Endothelial cell of umbilical vein (primary cell): ENCODE measurements at regions of chr1 and their contacts with region 1.

Region 1: DNA sequence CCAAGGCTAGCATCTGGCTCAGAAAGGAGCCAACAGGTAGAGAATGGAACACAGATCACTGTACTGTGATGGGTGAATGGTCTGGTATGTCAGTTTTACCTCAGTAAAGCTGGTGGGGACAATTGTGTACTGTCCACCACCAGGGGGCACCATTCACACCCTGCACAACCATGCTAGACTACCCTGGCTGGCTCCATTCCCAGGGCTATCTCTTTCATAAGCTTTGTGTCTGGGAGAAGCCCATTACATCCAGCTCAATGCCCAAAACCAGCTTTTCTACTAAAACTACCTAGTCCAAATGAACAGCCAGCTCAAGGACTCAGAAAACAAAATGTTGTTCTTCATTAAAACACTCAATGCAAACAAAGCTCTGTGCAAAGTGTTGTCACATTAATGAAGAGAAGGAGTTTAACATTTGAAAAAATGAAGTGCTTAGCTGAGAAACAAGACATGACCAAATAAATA is 62.0 kb upstream of the RASAL2 start:
- DNase-seq: peak; percentile 84
- H3K4me3 ChIP-seq: no peak overlapping the region
- H3K27ac ChIP-seq: no peak overlapping the region
- H3K4me1 ChIP-seq: peaks cover 7% of the 10 kb centered on the region
- H3K27me3 ChIP-seq: no peaks in the 10 kb centered on the region
- CTCF ChIP-seq: peak; percentile 80 to 84
- POLR2A ChIP-seq: no peak

Region 2: DNA sequence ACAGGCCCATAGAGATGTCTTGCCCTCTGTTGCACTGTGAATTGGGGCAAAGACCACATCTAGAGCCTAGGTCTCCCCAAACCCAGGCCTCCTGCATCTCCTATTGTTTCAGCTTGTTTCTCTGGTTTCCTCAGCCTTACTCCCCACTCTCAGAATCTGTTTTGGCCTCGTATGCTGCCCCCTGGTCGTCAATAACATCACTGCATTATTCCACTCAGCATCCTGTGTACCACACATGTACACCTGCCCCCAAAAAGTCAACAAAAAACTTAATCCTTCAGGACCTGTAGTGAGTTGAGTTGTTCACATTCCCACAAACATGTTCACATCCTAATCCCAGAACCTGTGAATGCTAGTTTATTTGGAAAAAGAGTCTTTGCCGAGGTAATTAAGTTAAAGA is 676.3 kb before region 1 on chr1:
- CTCF ChIA-PET with region 1: no interaction called
- POLR2A ChIA-PET with region 1: no interaction called
- dilution Hi-C with region 1: no loop called
- intact Hi-C with region 1: no loop called
- DNase-seq: peak; percentile 6
- H3K4me3 ChIP-seq: no peak overlapping the region
- H3K27ac ChIP-seq: no peak overlapping the region
- H3K4me1 ChIP-seq: no peaks in the 10 kb centered on the region
- H3K27me3 ChIP-seq: no peaks in the 10 kb centered on the region
- CTCF ChIP-seq: peak; percentile 12 to 21
- POLR2A ChIP-seq: no peak

Region 3: DNA sequence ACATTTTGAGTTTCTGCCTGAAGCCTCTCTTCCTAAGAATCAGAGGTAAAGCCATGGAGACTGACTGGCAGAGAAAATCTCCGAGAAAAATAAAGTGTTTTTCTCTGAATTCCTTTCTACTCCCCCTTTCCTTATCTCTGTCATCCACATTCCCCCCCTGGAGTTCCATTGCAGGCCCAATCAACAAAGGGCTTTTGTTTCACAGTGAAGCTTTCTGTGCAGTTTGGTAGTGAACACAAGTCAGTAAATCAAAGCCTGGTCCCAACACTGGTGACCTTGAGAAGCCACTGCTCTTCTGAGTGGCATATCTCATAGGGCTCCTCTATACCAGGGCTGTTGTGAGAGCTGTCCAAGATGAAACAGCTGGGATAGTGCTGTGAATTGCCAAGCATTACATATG is 290.4 kb before region 1 on chr1:
- CTCF ChIA-PET with region 1: no interaction called
- POLR2A ChIA-PET with region 1: no interaction called
- dilution Hi-C with region 1: no loop called
- intact Hi-C with region 1: no loop called
- DNase-seq: no peak
- H3K4me3 ChIP-seq: no peak overlapping the region
- H3K27ac ChIP-seq: no peak overlapping the region
- H3K4me1 ChIP-seq: no peaks in the 10 kb centered on the region
- H3K27me3 ChIP-seq: no peaks in the 10 kb centered on the region
- CTCF ChIP-seq: no peak
- POLR2A ChIP-seq: no peak

Region 4: GRCh38 chr1:177948336-177948972 is 83.4 kb before region 1 on chr1:
- CTCF ChIA-PET with region 1: interaction called, 18 read pairs
- POLR2A ChIA-PET with region 1: no interaction called
- dilution Hi-C with region 1: no loop called
- intact Hi-C with region 1: loop called (anchors 1 kb)
- DNase-seq: peak; percentile 75
- H3K4me3 ChIP-seq: no peak overlapping the region
- H3K27ac ChIP-seq: no peak overlapping the region
- H3K4me1 ChIP-seq: no peaks in the 10 kb centered on the region
- H3K27me3 ChIP-seq: no peaks in the 10 kb centered on the region
- CTCF ChIP-seq: peak; percentile 86 to 94
- POLR2A ChIP-seq: no peak

Region 5: GRCh38 chr1:178057912-178058534 is 26.1 kb after region 1 on chr1:
- CTCF ChIA-PET with region 1: interaction called, 43 read pairs
- POLR2A ChIA-PET with region 1: no interaction called
- dilution Hi-C with region 1: no loop called
- intact Hi-C with region 1: no loop called
- DNase-seq: peak; percentile 38
- H3K4me3 ChIP-seq: no peak overlapping the region
- H3K27ac ChIP-seq: no peak overlapping the region
- H3K4me1 ChIP-seq: peaks cover 22% of the 10 kb centered on the region
- H3K27me3 ChIP-seq: no peaks in the 10 kb centered on the region
- CTCF ChIP-seq: no peak
- POLR2A ChIP-seq: no peak

Region 6: GRCh38 chr1:178180405-178180804 is 148.5 kb after region 1 on chr1:
- CTCF ChIA-PET with region 1: interaction called, 12 read pairs
- POLR2A ChIA-PET with region 1: no interaction called
- dilution Hi-C with region 1: no loop called
- intact Hi-C with region 1: no loop called
- DNase-seq: no peak
- H3K4me3 ChIP-seq: no peak overlapping the region
- H3K27ac ChIP-seq: no peak overlapping the region
- H3K4me1 ChIP-seq: no peaks in the 10 kb centered on the region
- H3K27me3 ChIP-seq: no peaks in the 10 kb centered on the region
- CTCF ChIP-seq: no peak
- POLR2A ChIP-seq: no peak

Region 7: GRCh38 chr1:178267646-178268094 is 235.8 kb after region 1 on chr1:
- CTCF ChIA-PET with region 1: interaction called, 10 read pairs
- POLR2A ChIA-PET with region 1: no interaction called
- dilution Hi-C with region 1: no loop called
- intact Hi-C with region 1: no loop called
- DNase-seq: peak; percentile 76
- H3K4me3 ChIP-seq: peak overlapping the region in 1 of 3 experiments; percentile 7
- H3K27ac ChIP-seq: peak overlapping the region; percentile 64
- H3K4me1 ChIP-seq: peaks cover 22% of the 10 kb centered on the region
- H3K27me3 ChIP-seq: no peaks in the 10 kb centered on the region
- CTCF ChIP-seq: no peak
- POLR2A ChIP-seq: no peak

Region 8: DNA sequence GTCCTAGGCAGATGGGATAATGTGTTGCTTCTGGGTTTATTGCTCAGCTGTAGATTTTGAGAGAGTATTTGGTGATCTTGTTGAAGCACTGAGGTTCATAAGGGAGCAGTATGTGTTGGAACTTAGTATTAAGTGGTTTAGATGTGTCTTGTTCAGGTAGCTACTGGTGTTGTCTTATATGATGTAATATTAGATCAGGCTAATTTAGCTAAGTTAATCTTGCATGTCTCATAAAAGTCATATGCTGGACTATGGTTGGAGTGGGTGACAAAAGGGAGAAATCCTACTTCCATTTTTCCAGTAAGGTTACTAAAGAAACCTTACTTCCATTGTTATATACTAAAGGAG is 268.4 kb after region 1 on chr1:
- CTCF ChIA-PET with region 1: interaction called, 33 read pairs
- POLR2A ChIA-PET with region 1: no interaction called
- dilution Hi-C with region 1: no loop called
- intact Hi-C with region 1: no loop called
- DNase-seq: no peak
- H3K4me3 ChIP-seq: no peak overlapping the region
- H3K27ac ChIP-seq: no peak overlapping the region
- H3K4me1 ChIP-seq: peaks cover 10% of the 10 kb centered on the region
- H3K27me3 ChIP-seq: no peaks in the 10 kb centered on the region
- CTCF ChIP-seq: no peak
- POLR2A ChIP-seq: no peak